A673 (cell line): ENCODE measurements at regions of chr18 and their contacts with region 1.

Region 1: GRCh38 chr18:74652392-74652988 is 54.8 kb downstream of the ZNF407 start:
- DNase-seq: peak; percentile 63
- H3K4me3 ChIP-seq: no peak overlapping the region
- H3K27ac ChIP-seq: no peak overlapping the region
- H3K4me1 ChIP-seq: no peaks in the 10 kb centered on the region
- H3K27me3 ChIP-seq: no peaks in the 10 kb centered on the region
- CTCF ChIP-seq: peak; percentile 69

Region 2: GRCh38 chr18:74963820-74964446 is 311.4 kb after region 1 on chr18:
- CTCF ChIA-PET with region 1: no interaction called
- POLR2A ChIA-PET with region 1: no interaction called
- intact Hi-C with region 1: loop called (anchors 2 kb)
- DNase-seq: peak; percentile 46
- H3K4me3 ChIP-seq: no peak overlapping the region
- H3K27ac ChIP-seq: no peak overlapping the region
- H3K4me1 ChIP-seq: no peaks in the 10 kb centered on the region
- H3K27me3 ChIP-seq: no peaks in the 10 kb centered on the region
- CTCF ChIP-seq: peak; percentile 50

Region 3: GRCh38 chr18:75041586-75041985 is 389.1 kb after region 1 on chr18:
- CTCF ChIA-PET with region 1: no interaction called
- POLR2A ChIA-PET with region 1: no interaction called
- intact Hi-C with region 1: loop called (anchors 5 kb)
- DNase-seq: peak; percentile 40
- H3K4me3 ChIP-seq: no peak overlapping the region
- H3K27ac ChIP-seq: no peak overlapping the region
- H3K4me1 ChIP-seq: no peaks in the 10 kb centered on the region
- H3K27me3 ChIP-seq: no peaks in the 10 kb centered on the region
- CTCF ChIP-seq: peak; percentile 56

Region 4: GRCh38 chr18:75478996-75479880 is 826.7 kb after region 1 on chr18:
- CTCF ChIA-PET with region 1: no interaction called
- POLR2A ChIA-PET with region 1: no interaction called
- intact Hi-C with region 1: loop called (anchors 2 kb)
- DNase-seq: peak; percentile 58
- H3K4me3 ChIP-seq: no peak overlapping the region
- H3K27ac ChIP-seq: no peak overlapping the region
- H3K4me1 ChIP-seq: peaks cover 3% of the 10 kb centered on the region
- H3K27me3 ChIP-seq: no peaks in the 10 kb centered on the region
- CTCF ChIP-seq: peak; percentile 70

Region 5: GRCh38 chr18:75727456-75727855 is 1075.0 kb after region 1 on chr18:
- CTCF ChIA-PET with region 1: no interaction called
- POLR2A ChIA-PET with region 1: no interaction called
- intact Hi-C with region 1: loop called (anchors 5 kb)
- DNase-seq: peak; percentile 51
- H3K4me3 ChIP-seq: no peak overlapping the region
- H3K27ac ChIP-seq: no peak overlapping the region
- H3K4me1 ChIP-seq: no peaks in the 10 kb centered on the region
- H3K27me3 ChIP-seq: peaks cover 23% of the 10 kb centered on the region
- CTCF ChIP-seq: peak; percentile 67

Region 6: DNA sequence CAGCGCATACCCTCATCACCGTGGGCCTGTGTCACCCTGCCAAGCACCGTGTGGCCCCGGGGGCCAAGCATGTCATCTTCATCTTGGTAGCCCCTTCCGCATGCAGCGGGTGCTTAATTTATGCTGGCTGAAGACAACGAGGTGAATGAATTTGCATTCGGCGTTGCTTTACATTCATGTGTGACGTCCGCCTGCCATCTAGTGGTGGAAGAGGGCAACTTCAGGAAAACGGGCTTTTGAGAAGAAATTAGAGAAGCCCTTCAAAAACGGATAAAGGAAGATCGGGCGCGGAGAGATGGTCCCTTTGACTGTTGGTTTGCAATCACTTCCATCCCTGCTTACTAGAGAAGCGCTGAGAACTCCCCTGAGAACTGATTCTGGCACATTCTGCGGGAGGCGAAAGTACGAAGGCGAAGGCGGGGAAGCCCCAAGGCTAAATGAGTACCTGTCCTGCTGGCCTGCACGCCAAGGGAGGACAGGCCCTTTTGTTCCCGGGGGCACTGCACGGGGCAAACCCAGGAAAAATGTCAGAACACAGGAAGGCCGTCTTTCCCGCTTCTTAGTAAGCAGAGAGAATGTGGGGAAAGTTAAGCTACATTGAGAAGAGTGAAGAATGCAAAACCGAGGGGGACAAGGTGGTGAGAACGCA is 1696.7 kb after region 1 on chr18:
- CTCF ChIA-PET with region 1: no interaction called
- POLR2A ChIA-PET with region 1: no interaction called
- intact Hi-C with region 1: loop called (anchors 5 kb)
- DNase-seq: peak; percentile 87
- H3K4me3 ChIP-seq: no peak overlapping the region
- H3K27ac ChIP-seq: no peak overlapping the region
- H3K4me1 ChIP-seq: peaks cover 14% of the 10 kb centered on the region
- H3K27me3 ChIP-seq: no peaks in the 10 kb centered on the region
- CTCF ChIP-seq: peak; percentile 91